Activated T-helper 1 cell treated with anti-CD3 and anti-CD28 coated beads, Interleukin-12 subunit alpha, Interleukin-12 subunit beta, Interleukin-2, Interleukin-4 antibody, amounts not matched to agents 30 ng/mL and 10 ng/mL and 1 ng/mL, durations not matched to agents 14 hours and 24 hours and 36 hours (primary cell): ENCODE measurements at regions of chr10 and their contacts with region 1.

Region 1: GRCh38 chr10:101297901-101298486 is 56.0 kb upstream of the BTRC start:
- DNase-seq: peak; percentile 46
- H3K4me3 Mint-ChIP-seq: no peak overlapping the region
- H3K27ac Mint-ChIP-seq: no peak overlapping the region
- H3K4me1 Mint-ChIP-seq: no peaks in the 10 kb centered on the region
- H3K27me3 Mint-ChIP-seq: peaks cover 48% of the 10 kb centered on the region

Region 2: GRCh38 chr10:101130984-101131961 is 166.7 kb before region 1 on chr10 and contains the start of gene TLX1:
- intact Hi-C with region 1: loop called (anchors 10 kb)
- DNase-seq: no peak
- H3K4me3 Mint-ChIP-seq: no peak within 1 kb of the TSS
- H3K27ac Mint-ChIP-seq: no peak within 1 kb of the TSS
- H3K4me1 Mint-ChIP-seq: peaks cover 8% of the 10 kb centered on the region
- H3K27me3 Mint-ChIP-seq: peaks cover 87% of the 10 kb centered on the region
- total RNA-seq, gene TLX1: not detected in 2 replicates

Region 3: GRCh38 chr10:101453791-101454718 is 156.1 kb after region 1 on chr10:
- intact Hi-C with region 1: no loop called
- DNase-seq: no peak
- H3K4me3 Mint-ChIP-seq: no peak overlapping the region
- H3K27ac Mint-ChIP-seq: no peak overlapping the region
- H3K4me1 Mint-ChIP-seq: peaks cover 19% of the 10 kb centered on the region
- H3K27me3 Mint-ChIP-seq: peaks cover 17% of the 10 kb centered on the region

Region 4: GRCh38 chr10:101467286-101467770 is 169.3 kb after region 1 on chr10:
- intact Hi-C with region 1: loop called (anchors 1 kb)
- DNase-seq: peak; percentile 19
- H3K4me3 Mint-ChIP-seq: no peak overlapping the region
- H3K27ac Mint-ChIP-seq: no peak overlapping the region
- H3K4me1 Mint-ChIP-seq: peaks cover 10% of the 10 kb centered on the region
- H3K27me3 Mint-ChIP-seq: no peaks in the 10 kb centered on the region

Region 5: DNA sequence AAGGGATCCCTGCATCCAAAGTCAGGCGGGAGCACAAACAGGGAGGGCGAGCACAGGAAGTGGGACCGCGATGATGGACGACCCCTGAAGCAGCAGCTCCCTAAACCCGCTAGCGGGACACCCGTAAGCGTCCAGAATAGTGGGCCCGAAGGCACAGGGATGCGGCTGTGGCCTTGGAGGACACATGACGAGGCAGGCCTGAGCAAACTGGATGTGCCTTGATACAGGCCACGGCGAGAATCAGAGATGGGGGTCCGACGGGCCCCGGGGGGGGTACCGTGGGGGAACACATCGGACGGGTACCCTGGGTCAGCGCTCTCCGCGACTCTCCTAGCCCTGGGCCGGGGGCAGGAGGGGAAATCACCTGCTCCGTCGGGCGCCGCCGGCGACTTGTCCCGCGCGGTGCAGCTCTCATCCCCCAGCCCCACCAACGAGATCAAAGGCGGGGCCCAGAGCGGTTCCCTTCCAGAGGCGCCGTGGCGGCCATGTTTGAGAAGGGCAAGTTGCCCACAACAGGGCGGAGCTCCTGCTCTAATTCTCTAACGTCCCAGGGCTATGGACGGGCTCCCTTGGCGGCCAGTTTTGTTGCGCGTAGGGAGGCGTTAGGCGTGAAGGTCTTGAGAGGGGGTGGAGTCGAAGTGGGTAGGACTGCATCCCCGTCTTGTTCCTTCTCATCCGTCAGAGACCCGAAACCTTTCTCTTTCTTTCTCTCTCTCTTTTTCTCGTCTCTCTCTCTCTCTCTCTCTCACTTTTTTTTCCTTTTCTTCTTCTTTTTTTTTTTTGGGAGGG is 1134.4 kb after region 1 on chr10 and contains the start of gene CUEDC2:
- intact Hi-C with region 1: no loop called
- DNase-seq: peak; percentile 95
- H3K4me3 Mint-ChIP-seq: peak within 1 kb of the TSS; percentile 95
- H3K27ac Mint-ChIP-seq: peak within 1 kb of the TSS; percentile 94
- H3K4me1 Mint-ChIP-seq: peaks cover 55% of the 10 kb centered on the region
- H3K27me3 Mint-ChIP-seq: no peaks in the 10 kb centered on the region
- total RNA-seq, gene CUEDC2: 59.0 and 59.4 TPM in 2 replicates